Heart right ventricle (tissue), 16 donors: ENCODE measurements at regions of chr1 and their contacts with region 1.

Region 1: DNA sequence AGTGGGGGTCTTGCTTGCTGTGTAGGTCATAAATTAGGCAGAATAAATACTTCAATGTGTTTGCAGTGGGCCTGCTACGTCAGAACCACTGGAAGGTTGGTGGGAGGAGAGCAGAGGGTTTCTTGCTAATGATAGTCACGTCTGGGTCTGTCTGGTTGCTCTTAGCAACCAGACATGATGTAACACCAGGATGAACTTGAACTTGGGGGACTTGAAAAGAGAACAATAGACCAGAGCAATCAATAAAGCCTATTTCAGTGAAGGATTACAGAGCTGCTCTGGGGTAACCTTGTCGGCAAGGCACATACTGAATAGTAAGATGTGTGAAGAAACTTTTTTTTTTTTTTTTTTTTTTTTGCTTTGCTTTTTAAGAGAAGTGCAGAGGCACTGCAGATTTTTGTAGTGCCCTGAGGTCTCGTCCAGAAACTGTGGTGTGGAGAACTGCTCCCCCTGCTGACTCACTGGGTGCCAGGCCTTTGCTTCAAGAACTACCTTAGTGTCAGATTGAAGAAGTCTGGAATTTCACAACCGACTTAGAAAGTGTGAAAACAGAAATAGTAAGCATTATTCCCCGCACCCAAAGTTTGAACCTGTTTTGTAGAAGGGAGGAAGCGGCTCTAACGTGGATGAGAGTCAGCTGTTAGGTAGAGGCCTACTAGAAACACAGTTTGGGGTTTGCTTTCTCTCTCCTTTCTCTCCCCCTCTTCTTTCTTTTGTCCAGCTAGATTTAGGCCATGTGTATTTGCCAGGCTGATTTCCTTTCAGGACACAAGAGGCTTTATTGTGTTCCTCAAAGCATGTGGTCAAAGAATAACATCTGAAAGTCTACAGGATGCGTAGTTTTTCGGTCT is 271.6 kb downstream of the TM2D1 start:
- DNase-seq: peak; percentile 79 to 91
- ATAC-seq: peak; percentile 66 to 88 (median 78)
- H3K4me3 ChIP-seq: peak overlapping the region in 2 of 10 donors; percentile 1 to 9
- H3K27ac ChIP-seq: peak overlapping the region; percentile 51 to 91 (median 83)
- H3K4me1 ChIP-seq: peaks cover 33 to 68% (median 65%) of the 10 kb centered on the region in 9 donors
- H3K27me3 ChIP-seq: no peaks in the 10 kb centered on the region
- CTCF ChIP-seq: peak; percentile 49 to 88 (median 82)

Region 2: DNA sequence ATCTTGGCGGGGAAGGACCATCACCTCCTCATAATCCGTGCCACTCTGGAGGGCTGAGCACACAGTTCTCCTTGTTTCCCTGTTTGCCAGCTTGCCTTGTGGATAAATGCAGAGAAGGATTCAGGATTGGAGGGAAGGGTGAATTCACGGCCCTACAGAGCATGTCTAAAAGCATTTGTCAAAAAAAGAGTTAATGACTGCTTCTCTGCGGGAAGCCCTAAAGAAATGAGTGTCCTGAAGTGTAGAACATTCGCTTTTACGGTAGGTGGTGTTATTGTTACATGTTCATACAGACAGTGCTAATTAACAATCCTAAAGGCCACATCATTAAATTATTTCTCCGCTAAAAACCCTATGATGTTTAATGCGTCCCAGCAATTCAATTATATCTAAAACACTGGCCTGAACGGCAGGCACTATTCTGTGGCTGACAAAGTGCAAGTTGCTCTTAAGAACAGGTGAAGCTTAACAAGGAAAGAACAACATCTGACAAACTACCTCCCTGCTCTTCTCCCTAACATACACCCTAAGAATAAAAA is 483.3 kb before region 1 on chr1:
- intact Hi-C with region 1: loop called in 5 of 10 experiments (anchors 5 to 10 kb)
- DNase-seq: no peak
- ATAC-seq: peak; percentile 52 to 83 (median 75)
- H3K4me3 ChIP-seq: peak overlapping the region in 1 of 10 donors; percentile 10
- H3K27ac ChIP-seq: peak overlapping the region in 7 of 10 donors; percentile 41 to 76 (median 66)
- H3K4me1 ChIP-seq: peaks cover 0 to 14% (median 8%) of the 10 kb centered on the region in 9 donors
- H3K27me3 ChIP-seq: no peaks in the 10 kb centered on the region
- CTCF ChIP-seq: peak; percentile 17 to 70 (median 60)

Region 3: GRCh38 chr1:61056573-61057439 is 396.5 kb before region 1 on chr1:
- intact Hi-C with region 1: loop called in 4 of 10 experiments (anchors 2 to 5 kb)
- DNase-seq: peak; percentile 55 to 60
- ATAC-seq: peak; percentile 40 to 71 (median 58)
- H3K4me3 ChIP-seq: peak overlapping the region; percentile 60 to 86 (median 72)
- H3K27ac ChIP-seq: peak overlapping the region; percentile 76 to 100 (median 88)
- H3K4me1 ChIP-seq: peaks cover 6 to 57% (median 45%) of the 10 kb centered on the region in 9 donors
- H3K27me3 ChIP-seq: peaks cover 0 to 29% (median 0%) of the 10 kb centered on the region in 7 donors
- CTCF ChIP-seq: no peak

Region 4: GRCh38 chr1:61244114-61244513 is 209.2 kb before region 1 on chr1:
- intact Hi-C with region 1: loop called in 1 of 10 experiments (anchors 5 kb)
- DNase-seq: no peak
- ATAC-seq: peak in 5 of 8 donors; percentile 15 to 64 (median 22)
- H3K4me3 ChIP-seq: no peak overlapping the region
- H3K27ac ChIP-seq: peak overlapping the region in 8 of 10 donors; percentile 3 to 91 (median 30)
- H3K4me1 ChIP-seq: peaks cover 0 to 71% (median 57%) of the 10 kb centered on the region in 9 donors
- H3K27me3 ChIP-seq: no peaks in the 10 kb centered on the region
- CTCF ChIP-seq: no peak

Region 5: DNA sequence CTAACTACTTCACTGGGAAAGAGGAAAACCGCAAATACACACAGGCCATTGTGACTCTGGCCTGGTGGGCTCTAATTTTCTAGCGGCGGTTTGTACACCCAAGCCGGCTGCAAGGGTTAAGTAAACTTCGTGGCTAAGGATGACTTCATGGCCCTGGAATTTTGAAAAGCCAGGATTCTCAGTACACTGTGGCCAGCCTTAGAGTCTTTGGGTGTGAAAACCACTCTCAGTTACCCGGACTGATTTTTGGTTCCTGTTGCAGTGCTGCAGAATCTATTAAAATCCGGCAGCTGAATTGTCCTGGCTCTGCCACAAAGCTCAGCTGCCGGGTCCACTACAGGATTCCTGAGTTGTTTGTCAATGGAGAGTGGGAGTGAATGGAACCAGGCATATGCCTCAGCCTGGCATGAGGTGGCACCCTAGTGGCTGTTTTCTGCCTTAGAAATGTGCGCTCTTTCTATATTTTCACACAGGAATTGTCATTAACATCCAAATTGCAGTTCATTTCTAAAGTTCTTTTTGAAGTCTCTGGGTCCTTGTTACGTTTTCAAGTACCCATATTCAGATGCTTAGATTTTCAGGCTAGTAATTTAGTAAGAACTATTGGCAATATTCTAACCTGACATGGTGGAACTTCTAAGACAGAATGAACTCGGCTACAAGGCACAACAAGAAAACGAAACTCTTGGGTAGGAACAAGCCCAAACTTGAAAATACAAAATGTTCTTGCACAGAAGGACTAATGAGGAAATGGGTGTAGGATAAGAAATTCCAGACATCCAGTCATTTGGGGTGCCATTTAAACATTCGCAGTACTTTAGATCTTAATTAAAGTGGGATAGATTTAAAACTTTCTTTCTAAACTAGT is 115.1 kb before region 1 on chr1:
- intact Hi-C with region 1: loop called in 8 of 10 experiments (anchors 5 to 10 kb)
- DNase-seq: peak; percentile 48 to 74
- ATAC-seq: peak; percentile 69 to 90 (median 87)
- H3K4me3 ChIP-seq: peak overlapping the region in 6 of 10 donors; percentile 11 to 28 (median 19)
- H3K27ac ChIP-seq: peak overlapping the region; percentile 44 to 86 (median 75)
- H3K4me1 ChIP-seq: peaks cover 8 to 64% (median 44%) of the 10 kb centered on the region in 9 donors
- H3K27me3 ChIP-seq: no peaks in the 10 kb centered on the region
- CTCF ChIP-seq: peak; percentile 19 to 80 (median 63)

Region 6: DNA sequence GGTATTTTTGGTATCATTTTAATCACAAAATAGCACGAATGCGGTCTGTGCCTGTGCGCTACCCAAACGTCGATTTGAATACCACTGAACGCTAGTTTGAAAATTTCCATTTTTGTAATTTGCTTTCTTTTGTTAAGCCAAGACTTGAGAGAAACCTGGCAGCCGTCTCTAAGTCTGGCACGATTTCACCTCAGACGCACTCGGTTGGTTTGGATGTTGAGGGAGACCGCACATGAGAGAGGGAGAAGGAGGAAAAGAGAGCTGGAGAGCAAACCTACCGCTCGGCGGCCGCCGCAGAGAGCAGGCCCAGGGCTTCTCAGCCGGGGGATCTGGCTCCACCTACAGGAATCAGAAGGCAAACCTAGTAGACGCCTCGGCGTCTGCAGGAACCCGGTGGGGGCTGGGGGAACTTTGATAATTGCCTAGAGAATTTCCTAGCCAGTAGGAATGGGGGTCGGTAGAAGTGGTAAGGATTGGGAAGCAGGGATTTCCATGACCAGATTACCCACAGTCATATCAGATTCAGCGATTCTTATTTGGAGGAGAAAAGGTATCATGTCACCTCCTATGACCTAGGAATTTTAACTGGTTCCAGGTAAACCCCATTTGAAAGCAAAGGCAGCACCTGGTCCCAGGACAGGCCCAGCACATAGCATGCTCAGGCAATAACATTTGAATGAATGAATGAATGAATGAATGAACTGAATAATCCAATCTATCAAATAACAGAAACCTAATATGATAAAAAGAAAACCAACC is 188.4 kb after region 1 on chr1:
- intact Hi-C with region 1: loop called in 3 of 10 experiments (anchors 5 to 10 kb)
- DNase-seq: peak; percentile 78 to 79
- ATAC-seq: peak; percentile 82 to 91 (median 88)
- H3K4me3 ChIP-seq: peak overlapping the region in 6 of 10 donors; percentile 28 to 49 (median 31)
- H3K27ac ChIP-seq: peak overlapping the region in 9 of 10 donors; percentile 39 to 90 (median 77)
- H3K4me1 ChIP-seq: peaks cover 0 to 32% (median 25%) of the 10 kb centered on the region in 9 donors
- H3K27me3 ChIP-seq: no peaks in the 10 kb centered on the region
- CTCF ChIP-seq: peak; percentile 52 to 92 (median 84)